ENCODE measurements at regions of chr3 and their contacts with region 1.

Region 1: GRCh38 chr3:65732051-65732935 is 306.4 kb downstream of the MAGI1 start:
- DNase-seq: peak; percentile 29
- ATAC-seq: peak; percentile 95
- H3K4me3 ChIP-seq: no peak overlapping the region
- H3K27ac ChIP-seq: no peak overlapping the region
- H3K4me1 ChIP-seq: no peaks in the 10 kb centered on the region
- H3K27me3 ChIP-seq: no peaks in the 10 kb centered on the region
- CTCF ChIP-seq: peak; percentile 53 to 84 (median 75); a peak in 5 of 6 replicates
- POLR2A ChIP-seq: no peak
- RAD21 ChIP-seq: peak; percentile 62

Region 2: DNA sequence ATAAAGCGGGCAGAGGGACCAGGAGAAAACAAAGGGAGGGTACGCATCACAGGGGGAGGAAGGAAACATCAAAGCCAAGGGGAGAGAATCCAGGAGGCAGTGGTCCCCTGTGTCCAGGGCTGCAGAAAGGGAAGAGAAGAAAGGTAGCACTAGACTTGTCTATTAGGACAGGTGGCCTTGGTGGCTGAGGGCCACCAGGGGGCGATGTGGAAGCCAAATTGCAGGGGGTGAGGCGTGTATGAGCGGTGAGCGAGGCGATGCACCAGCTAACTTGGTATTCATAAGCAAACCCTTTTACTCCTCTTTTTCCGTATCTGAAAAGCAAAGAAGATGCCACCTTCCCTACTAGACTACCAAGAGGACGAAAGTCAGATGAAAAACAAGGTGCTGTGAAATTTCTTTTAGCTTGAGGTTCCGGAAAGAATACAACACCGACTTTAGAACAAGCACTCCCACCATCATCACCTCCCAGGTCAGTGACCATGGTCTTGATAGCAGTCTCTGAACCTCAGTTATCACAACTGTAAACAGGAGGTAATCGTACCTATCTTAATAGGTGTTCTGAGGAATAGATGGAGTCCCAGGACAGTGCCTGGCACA is 390.1 kb before region 1 on chr3:
- CTCF ChIA-PET with region 1: interaction called, 3 read pairs
- POLR2A ChIA-PET with region 1: no interaction called
- RAD21 ChIA-PET with region 1: no interaction called
- intact Hi-C with region 1: loop called (anchors 5 kb)
- DNase-seq: peak; percentile 42
- ATAC-seq: peak; percentile 100
- H3K4me3 ChIP-seq: no peak overlapping the region
- H3K27ac ChIP-seq: no peak overlapping the region
- H3K4me1 ChIP-seq: no peaks in the 10 kb centered on the region
- H3K27me3 ChIP-seq: 0 out of 2 replicates have a peak, but pooled peaks cover 6% of the 10 kb centered on the region
- CTCF ChIP-seq: peak; percentile 45 to 87 (median 84); a peak in 5 of 6 replicates
- POLR2A ChIP-seq: no peak
- RAD21 ChIP-seq: peak; percentile 65

Region 3: GRCh38 chr3:65508750-65509422 is 223.4 kb before region 1 on chr3:
- CTCF ChIA-PET with region 1: no interaction called
- POLR2A ChIA-PET with region 1: no interaction called
- RAD21 ChIA-PET with region 1: no interaction called
- intact Hi-C with region 1: no loop called
- DNase-seq: no peak
- ATAC-seq: peak; percentile 54
- H3K4me3 ChIP-seq: peak overlapping the region; percentile 40 to 52
- H3K27ac ChIP-seq: peak overlapping the region; percentile 49
- H3K4me1 ChIP-seq: peaks cover 4 to 7% of the 10 kb centered on the region in 2 experiments; a peak in 3 of 4 replicates
- H3K27me3 ChIP-seq: no peaks in the 10 kb centered on the region
- CTCF ChIP-seq: no peak
- POLR2A ChIP-seq: no peak
- RAD21 ChIP-seq: no peak

Region 4: GRCh38 chr3:65751123-65751700 is 18.9 kb after region 1 on chr3:
- CTCF ChIA-PET with region 1: interaction called, 7 read pairs
- POLR2A ChIA-PET with region 1: no interaction called
- RAD21 ChIA-PET with region 1: no interaction called
- intact Hi-C with region 1: loop called (anchors 1 kb)
- DNase-seq: peak; percentile 3
- ATAC-seq: peak; percentile 88
- H3K4me3 ChIP-seq: no peak overlapping the region
- H3K27ac ChIP-seq: no peak overlapping the region
- H3K4me1 ChIP-seq: no peaks in the 10 kb centered on the region
- H3K27me3 ChIP-seq: no peaks in the 10 kb centered on the region
- CTCF ChIP-seq: peak; percentile 21 to 76 (median 74); a peak in 4 of 6 replicates
- POLR2A ChIP-seq: no peak
- RAD21 ChIP-seq: peak; percentile 47